ENCODE measurements at regions of chr15 and their contacts with region 1.

Region 1: DNA sequence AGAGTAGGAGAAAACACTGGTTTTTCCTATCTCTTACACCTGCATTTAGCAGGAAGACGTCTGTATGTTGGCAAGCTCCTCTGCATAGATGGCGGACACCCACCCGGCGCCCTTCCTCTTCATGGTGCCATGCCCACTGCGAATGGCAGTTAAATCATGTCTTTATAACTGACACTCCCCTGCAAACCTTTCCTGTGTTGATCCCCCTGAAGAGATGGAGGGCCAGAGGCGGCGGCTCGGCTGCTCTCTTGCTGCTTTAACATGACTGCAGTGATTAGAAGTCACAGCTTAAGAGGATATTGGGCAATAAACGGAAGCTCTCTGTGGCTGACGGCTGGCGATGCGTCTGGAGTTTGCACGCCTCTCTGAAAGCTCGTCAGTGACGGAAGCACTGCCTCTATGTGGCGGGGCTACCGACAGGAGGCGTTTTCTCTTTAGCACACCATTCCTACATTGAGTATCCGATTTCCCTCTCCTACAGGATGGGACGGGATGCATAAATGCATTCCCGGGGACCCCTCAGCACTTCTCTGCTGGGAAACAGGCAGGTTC is 25.5 kb upstream of the SNRPA1 start:
- DNase-seq: peak; percentile 90
- ATAC-seq: peak; percentile 95
- H3K4me3 Mint-ChIP-seq: peak overlapping the region; percentile 72
- H3K27ac Mint-ChIP-seq: peak overlapping the region; percentile 94
- H3K4me1 Mint-ChIP-seq: peaks cover 38% of the 10 kb centered on the region
- H3K27me3 Mint-ChIP-seq: no peaks in the 10 kb centered on the region

Region 2: GRCh38 chr15:101288908-101289513 is 31.6 kb before region 1 on chr15:
- CTCF ChIA-PET with region 1: interaction called, 42 read pairs
- POLR2A ChIA-PET with region 1: interaction called, 36 read pairs
- DNase-seq: peak; percentile 51
- ATAC-seq: peak; percentile 54
- H3K4me3 Mint-ChIP-seq: no peak overlapping the region
- H3K27ac Mint-ChIP-seq: peak overlapping the region; percentile 52
- H3K4me1 Mint-ChIP-seq: peaks cover 55% of the 10 kb centered on the region
- H3K27me3 Mint-ChIP-seq: no peaks in the 10 kb centered on the region

Region 3: DNA sequence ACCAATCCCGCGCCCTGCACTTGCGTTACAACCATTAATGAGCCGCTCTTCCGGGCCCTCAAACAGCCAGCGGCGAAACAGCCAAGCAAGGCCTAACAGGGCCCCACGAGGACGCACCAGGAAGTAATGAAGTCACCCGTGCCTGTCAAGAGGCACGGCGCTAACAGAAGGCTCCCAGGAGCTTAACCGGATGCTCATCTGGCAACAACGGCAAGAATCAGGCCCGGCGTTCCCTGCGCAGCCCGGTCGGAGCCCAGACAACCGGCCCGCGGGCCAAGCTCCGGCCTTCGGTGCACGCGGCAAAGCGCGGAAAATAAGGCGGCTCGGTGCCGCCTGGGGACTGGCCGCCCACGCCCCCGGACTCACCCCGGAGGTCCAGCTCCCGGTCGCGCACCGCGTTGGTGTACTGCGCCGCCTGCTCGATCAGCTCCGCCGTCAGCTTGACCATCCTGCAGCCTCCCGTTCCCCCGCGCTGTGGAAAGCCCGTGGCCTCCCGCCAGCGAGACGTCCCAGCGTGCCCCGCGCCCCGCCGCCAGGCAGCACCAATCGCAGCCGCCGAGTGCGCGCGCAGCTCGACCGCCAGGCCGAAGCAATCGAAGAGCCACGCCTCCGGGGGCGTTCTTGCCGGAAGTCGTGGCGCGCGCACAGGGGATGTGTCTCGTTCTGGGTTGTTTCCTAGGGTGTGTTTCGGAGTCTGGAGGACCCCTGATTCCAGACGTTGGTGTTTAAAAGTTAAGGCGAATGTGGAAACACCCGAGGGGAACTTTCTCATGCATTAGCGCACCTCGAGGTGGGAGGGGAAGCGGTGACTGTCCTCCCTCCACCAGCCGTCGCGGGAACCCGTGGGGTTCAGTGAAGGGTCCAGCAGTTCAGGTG is 25.6 kb before region 1 on chr15 and contains the start of gene SNRPA1:
- CTCF ChIA-PET with region 1: interaction called, 42 read pairs
- POLR2A ChIA-PET with region 1: interaction called, 36 read pairs
- DNase-seq: peak; percentile 97
- ATAC-seq: peak; percentile 87
- H3K4me3 Mint-ChIP-seq: peak within 1 kb of the TSS; percentile 98
- H3K27ac Mint-ChIP-seq: peak within 1 kb of the TSS; percentile 93
- H3K4me1 Mint-ChIP-seq: peaks cover 37% of the 10 kb centered on the region
- H3K27me3 Mint-ChIP-seq: no peaks in the 10 kb centered on the region
- total RNA-seq, gene SNRPA1: 138 to 144 TPM

Region 4: GRCh38 chr15:101333401-101333800 is 12.8 kb after region 1 on chr15:
- CTCF ChIA-PET with region 1: interaction called, 33 read pairs
- POLR2A ChIA-PET with region 1: interaction called, 6 read pairs
- DNase-seq: no peak
- ATAC-seq: no peak
- H3K4me3 Mint-ChIP-seq: no peak overlapping the region
- H3K27ac Mint-ChIP-seq: peak overlapping the region; percentile 95
- H3K4me1 Mint-ChIP-seq: peaks cover 14% of the 10 kb centered on the region
- H3K27me3 Mint-ChIP-seq: peaks cover 5% of the 10 kb centered on the region

Region 5: DNA sequence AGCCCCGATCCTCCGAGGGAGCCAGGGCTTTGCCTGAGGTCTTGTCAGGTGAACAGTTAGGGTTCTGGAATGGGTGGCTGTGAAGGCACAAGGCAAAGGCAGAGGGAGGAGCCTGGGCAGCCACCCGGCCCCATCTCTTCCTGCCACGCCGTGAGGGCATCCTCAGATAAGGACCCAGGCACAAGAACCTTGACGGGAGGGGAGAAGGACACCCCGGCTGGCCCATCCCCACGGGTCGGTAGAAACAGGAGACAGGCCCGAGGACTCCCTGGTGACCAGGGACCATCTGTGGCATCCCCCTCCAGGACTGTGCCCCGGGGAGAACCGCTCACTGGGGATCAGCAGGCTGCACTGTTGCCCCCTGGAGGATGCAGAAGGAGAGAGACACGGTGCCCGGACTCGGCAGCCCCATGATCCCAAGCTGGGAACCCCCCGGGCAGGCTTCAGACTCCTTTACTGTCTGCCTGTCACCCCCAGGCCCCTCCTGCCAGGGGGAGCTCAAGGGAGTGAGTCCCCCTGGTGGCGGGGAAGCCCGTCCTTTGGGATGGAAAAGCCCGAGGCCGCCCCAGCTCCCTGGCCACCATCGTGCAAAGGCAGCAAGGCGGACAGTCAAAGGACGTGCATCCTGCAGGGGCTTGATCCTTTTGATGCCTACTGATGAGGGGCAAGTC is 181.3 kb after region 1 on chr15:
- CTCF ChIA-PET with region 1: interaction called, 12 read pairs
- POLR2A ChIA-PET with region 1: no interaction called
- DNase-seq: peak; percentile 69
- ATAC-seq: peak; percentile 87
- H3K4me3 Mint-ChIP-seq: peak overlapping the region; percentile 38
- H3K27ac Mint-ChIP-seq: no peak overlapping the region
- H3K4me1 Mint-ChIP-seq: peaks cover 21% of the 10 kb centered on the region
- H3K27me3 Mint-ChIP-seq: peaks cover 17% of the 10 kb centered on the region

Measured in activated CD8-positive, alpha-beta T cell treated with anti-CD3 and anti-CD28 coated beads, Interleukin-2, amount 10 ng/mL, durations not matched to agents 7 days and 5 days (primary cell).